CD4-positive, alpha-beta T cell (primary cell): ENCODE measurements at regions of chr19 and their contacts with region 1.

Region 1: GRCh38 chr19:11380653-11381534 is 3.2 kb downstream of the EPOR start:
- DNase-seq: peak; percentile 95 to 99 (median 97)
- ATAC-seq: peak; percentile 86
- H3K4me3 ChIP-seq: peak overlapping the region; percentile 69
- H3K4me3 Mint-ChIP-seq: peak overlapping the region; percentile 93
- H3K27ac ChIP-seq: peak overlapping the region; percentile 88 to 92
- H3K27ac Mint-ChIP-seq: peak overlapping the region; percentile 92
- H3K4me1 ChIP-seq: peaks cover 70% of the 10 kb centered on the region
- H3K4me1 Mint-ChIP-seq: peaks cover 41% of the 10 kb centered on the region
- H3K27me3 ChIP-seq: peaks cover 21% of the 10 kb centered on the region in 2 experiments
- H3K27me3 Mint-ChIP-seq: peaks cover 25% of the 10 kb centered on the region
- CTCF ChIP-seq: peak; percentile 78

Region 2: GRCh38 chr19:11346092-11346940 is 34.6 kb before region 1 on chr19 and contains the starts of genes CCDC159 and TMEM205:
- CTCF ChIA-PET with region 1: interaction called, 19 read pairs
- POLR2A ChIA-PET with region 1: interaction called, 86 read pairs
- intact Hi-C with region 1: loop called in 1 of 2 experiments (anchors 2 kb)
- DNase-seq: peak; percentile 96 to 99 (median 98)
- ATAC-seq: peak; percentile 98
- H3K4me3 ChIP-seq: peak within 1 kb of the TSS; percentile 75
- H3K4me3 Mint-ChIP-seq: peak within 1 kb of the TSS; percentile 89
- H3K27ac ChIP-seq: peak within 1 kb of the TSS; percentile 36 to 69
- H3K27ac Mint-ChIP-seq: peak within 1 kb of the TSS; percentile 74
- H3K4me1 ChIP-seq: peaks cover 29% of the 10 kb centered on the region
- H3K4me1 Mint-ChIP-seq: peaks cover 28% of the 10 kb centered on the region
- H3K27me3 ChIP-seq: no peaks in the 10 kb centered on the region
- H3K27me3 Mint-ChIP-seq: no peaks in the 10 kb centered on the region
- CTCF ChIP-seq: no peak
- total RNA-seq, gene CCDC159: 35.5 to 42.4 TPM
- total RNA-seq, gene TMEM205: 8.8 to 10.4 TPM

Region 3: GRCh38 chr19:11405846-11406643 is 25.2 kb after region 1 on chr19:
- CTCF ChIA-PET with region 1: interaction called, 17 read pairs
- POLR2A ChIA-PET with region 1: no interaction called
- intact Hi-C with region 1: loop called in 1 of 2 experiments (anchors 2 kb)
- DNase-seq: peak in 7 of 14 experiments; percentile 17 to 59 (median 43)
- ATAC-seq: peak; percentile 66
- H3K4me3 ChIP-seq: no peak overlapping the region
- H3K4me3 Mint-ChIP-seq: no peak overlapping the region
- H3K27ac ChIP-seq: no peak overlapping the region
- H3K27ac Mint-ChIP-seq: no peak overlapping the region
- H3K4me1 ChIP-seq: peaks cover 6% of the 10 kb centered on the region
- H3K4me1 Mint-ChIP-seq: no peaks in the 10 kb centered on the region
- H3K27me3 ChIP-seq: peaks cover 5 to 9% of the 10 kb centered on the region in 2 experiments
- H3K27me3 Mint-ChIP-seq: peaks cover 32% of the 10 kb centered on the region
- CTCF ChIP-seq: no peak

Region 4: GRCh38 chr19:11435058-11435832 is 54.4 kb after region 1 on chr19 and contains the starts of genes ODAD3 and PRKCSH:
- CTCF ChIA-PET with region 1: interaction called, 38 read pairs
- POLR2A ChIA-PET with region 1: interaction called, 40 read pairs
- intact Hi-C with region 1: loop called (anchors 1 to 2 kb)
- DNase-seq: peak; percentile 95 to 99 (median 97)
- ATAC-seq: peak; percentile 94
- H3K4me3 ChIP-seq: peak within 1 kb of the TSS; percentile 90
- H3K4me3 Mint-ChIP-seq: peak within 1 kb of the TSS; percentile 96
- H3K27ac ChIP-seq: peak within 1 kb of the TSS; percentile 58 to 83
- H3K27ac Mint-ChIP-seq: peak within 1 kb of the TSS; percentile 84
- H3K4me1 ChIP-seq: peaks cover 26% of the 10 kb centered on the region
- H3K4me1 Mint-ChIP-seq: peaks cover 21% of the 10 kb centered on the region
- H3K27me3 ChIP-seq: no peaks in the 10 kb centered on the region
- H3K27me3 Mint-ChIP-seq: no peaks in the 10 kb centered on the region
- CTCF ChIP-seq: peak; percentile 87
- total RNA-seq, gene ODAD3: not detected
- total RNA-seq, gene PRKCSH: 257 to 260 TPM

Region 5: GRCh38 chr19:11505032-11505503 is 124.2 kb after region 1 on chr19:
- CTCF ChIA-PET with region 1: no interaction called
- POLR2A ChIA-PET with region 1: no interaction called
- intact Hi-C with region 1: loop called (anchors 5 to 10 kb)
- DNase-seq: peak; percentile 90 to 99 (median 96)
- ATAC-seq: peak; percentile 92
- H3K4me3 ChIP-seq: peak overlapping the region; percentile 71
- H3K4me3 Mint-ChIP-seq: peak overlapping the region; percentile 89
- H3K27ac ChIP-seq: peak overlapping the region; percentile 52 to 96
- H3K27ac Mint-ChIP-seq: peak overlapping the region; percentile 95
- H3K4me1 ChIP-seq: peaks cover 20% of the 10 kb centered on the region
- H3K4me1 Mint-ChIP-seq: peaks cover 14% of the 10 kb centered on the region
- H3K27me3 ChIP-seq: no peaks in the 10 kb centered on the region
- H3K27me3 Mint-ChIP-seq: no peaks in the 10 kb centered on the region
- CTCF ChIP-seq: no peak

Region 6: DNA sequence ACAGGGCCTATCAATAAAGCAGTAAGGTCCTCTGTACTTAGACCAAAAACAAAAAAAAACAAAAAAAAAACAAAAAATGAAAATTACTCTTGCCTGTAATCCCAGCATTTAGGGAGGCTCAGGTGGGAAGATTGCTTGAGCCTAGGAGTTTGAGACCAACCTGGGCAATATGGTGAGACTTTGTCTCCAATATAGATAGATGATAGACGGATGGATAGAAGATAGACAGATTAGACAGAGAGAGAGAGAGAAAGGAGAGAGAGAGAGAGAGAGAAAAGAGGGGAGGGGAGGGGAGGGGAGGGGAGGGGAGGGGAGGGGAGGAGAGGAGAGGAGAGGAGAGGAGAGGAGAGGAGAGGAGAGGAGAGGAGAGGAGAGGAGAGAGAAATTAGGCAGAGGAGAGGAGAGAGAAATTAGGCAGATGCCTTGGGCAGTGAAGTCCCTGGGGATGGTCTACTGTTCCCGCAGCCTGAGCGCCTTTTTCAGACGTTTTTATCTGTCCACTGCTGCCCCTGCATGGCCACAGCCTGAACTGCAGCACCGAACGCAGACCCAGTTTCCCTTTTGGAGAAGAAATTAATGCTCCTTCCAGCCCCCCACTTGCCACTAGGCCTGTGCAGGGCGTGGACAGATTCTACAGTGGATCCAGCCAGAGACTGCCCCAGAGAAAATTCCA is 206.5 kb after region 1 on chr19:
- CTCF ChIA-PET with region 1: no interaction called
- POLR2A ChIA-PET with region 1: no interaction called
- intact Hi-C with region 1: loop called in 1 of 2 experiments (anchors 5 kb)
- DNase-seq: peak; percentile 62 to 84 (median 72)
- ATAC-seq: peak; percentile 98
- H3K4me3 ChIP-seq: no peak overlapping the region
- H3K4me3 Mint-ChIP-seq: no peak overlapping the region
- H3K27ac ChIP-seq: no peak overlapping the region
- H3K27ac Mint-ChIP-seq: no peak overlapping the region
- H3K4me1 ChIP-seq: peaks cover 7% of the 10 kb centered on the region
- H3K4me1 Mint-ChIP-seq: no peaks in the 10 kb centered on the region
- H3K27me3 ChIP-seq: no peaks in the 10 kb centered on the region
- H3K27me3 Mint-ChIP-seq: no peaks in the 10 kb centered on the region
- CTCF ChIP-seq: peak; percentile 85